Posterior vena cava (tissue), 2 donors: ENCODE measurements at regions of chr1 and their contacts with region 1.

Region 1: DNA sequence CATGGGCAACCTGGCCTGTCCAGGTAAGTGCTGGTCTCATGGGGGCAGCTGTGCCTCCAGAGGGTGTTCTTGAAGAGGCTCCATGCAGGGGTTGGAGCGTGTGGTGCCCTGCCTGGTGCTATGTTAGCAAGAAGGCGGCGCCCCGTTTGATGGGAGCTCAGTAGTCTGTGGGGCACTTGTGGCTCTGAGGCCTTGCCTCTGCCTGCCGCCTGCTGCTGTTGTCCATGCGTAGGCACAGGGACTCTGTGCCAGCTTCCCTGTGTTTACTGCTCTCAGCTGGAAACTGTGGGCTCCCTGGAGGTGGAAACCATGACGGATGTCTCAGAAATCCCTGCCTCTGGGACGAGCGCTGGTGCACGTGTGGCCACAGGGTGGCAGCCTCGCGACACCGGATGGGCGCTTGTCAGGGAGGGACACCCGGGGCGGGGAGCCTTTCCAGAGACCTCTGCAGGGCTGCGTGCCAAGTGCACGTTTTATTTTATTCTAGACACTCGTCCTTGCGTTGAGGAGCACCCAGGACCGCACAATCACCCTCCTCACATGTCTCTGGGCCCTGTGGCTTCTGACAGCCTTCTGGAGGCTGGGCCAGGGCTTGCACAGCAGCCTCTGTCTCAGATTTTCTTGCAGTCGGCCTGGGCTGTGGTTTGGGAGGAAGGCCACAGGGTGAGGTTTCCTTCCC is 27.1 kb downstream of the SNAP47 start:
- DNase-seq: peak; percentile 94

Region 2: GRCh38 chr1:226702957-226703831 is 1059.2 kb before region 1 on chr1:
- intact Hi-C with region 1: loop called in 1 of 2 experiments (anchors 10 kb)
- DNase-seq: peak; percentile 92